ENCODE measurements at regions of chrX and their contacts with region 1.

Region 1: GRCh38 chrX:64975989-64976672 is at the start of gene ZC4H2:
- DNase-seq: peak; percentile 82
- H3K4me3 ChIP-seq: peak within 1 kb of the TSS; percentile 91
- H3K27ac ChIP-seq: peak within 1 kb of the TSS; percentile 43
- H3K4me1 ChIP-seq: peaks cover 15% of the 10 kb centered on the region
- CTCF ChIP-seq: no peak
- total RNA-seq, gene ZC4H2: 20.1 and 21.0 TPM in 2 replicates

Region 2: GRCh38 chrX:64850371-64851082 is 125.6 kb before region 1 on chrX:
- CTCF ChIA-PET with region 1: no interaction called
- POLR2A ChIA-PET with region 1: no interaction called
- intact Hi-C with region 1: loop called (anchors 5 kb)
- DNase-seq: peak; percentile 89
- H3K4me3 ChIP-seq: peak overlapping the region; percentile 47
- H3K27ac ChIP-seq: peak overlapping the region; percentile 99
- H3K4me1 ChIP-seq: peaks cover 48% of the 10 kb centered on the region
- CTCF ChIP-seq: no peak

Region 3: DNA sequence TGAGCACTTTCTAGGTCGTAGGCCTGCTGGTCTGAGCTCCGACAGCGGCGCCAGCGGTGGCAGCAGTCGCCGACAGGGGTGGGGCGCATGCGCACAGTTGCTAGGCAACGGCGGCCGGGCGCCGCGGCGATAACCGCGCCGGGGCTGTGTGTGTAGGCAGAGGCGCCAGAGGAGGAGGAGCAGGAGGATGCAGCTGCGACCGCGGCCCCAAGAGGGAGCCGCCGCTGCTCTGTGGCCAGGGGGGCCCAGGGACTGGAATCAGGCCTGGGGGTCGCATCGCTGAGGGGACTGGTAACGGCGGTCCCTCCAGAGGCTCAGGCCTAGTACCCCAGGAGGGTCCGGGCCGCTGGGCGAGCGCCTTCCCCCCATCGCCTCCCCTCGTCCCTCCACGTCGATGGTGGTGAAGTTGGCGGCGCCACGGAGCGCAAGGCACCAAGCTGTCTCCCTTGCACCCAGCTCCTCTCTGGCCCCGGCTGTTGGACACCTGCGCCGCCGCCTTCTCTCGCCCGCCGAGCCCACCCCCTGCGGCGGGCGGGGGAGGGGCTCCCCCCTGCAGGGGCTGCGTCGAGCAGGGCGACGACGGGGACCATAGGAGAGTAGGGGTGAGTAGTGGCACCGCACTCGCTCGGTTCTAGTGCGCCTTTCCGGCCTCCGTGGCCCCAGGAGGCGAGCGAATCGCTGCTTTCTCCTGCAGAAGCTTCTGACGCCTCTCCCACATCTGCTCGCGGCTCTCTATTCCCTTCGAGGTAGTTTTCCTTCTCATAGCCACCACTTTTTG is 58.7 kb after region 1 on chrX:
- CTCF ChIA-PET with region 1: no interaction called
- POLR2A ChIA-PET with region 1: interaction called, 5 read pairs
- intact Hi-C with region 1: loop called (anchors 2 kb)
- DNase-seq: peak; percentile 87
- H3K4me3 ChIP-seq: peak within 1 kb of the TSS; percentile 80
- H3K27ac ChIP-seq: peak within 1 kb of the TSS; percentile 71
- H3K4me1 ChIP-seq: peaks cover 15% of the 10 kb centered on the region
- CTCF ChIP-seq: peak; percentile 62

Region 4: DNA sequence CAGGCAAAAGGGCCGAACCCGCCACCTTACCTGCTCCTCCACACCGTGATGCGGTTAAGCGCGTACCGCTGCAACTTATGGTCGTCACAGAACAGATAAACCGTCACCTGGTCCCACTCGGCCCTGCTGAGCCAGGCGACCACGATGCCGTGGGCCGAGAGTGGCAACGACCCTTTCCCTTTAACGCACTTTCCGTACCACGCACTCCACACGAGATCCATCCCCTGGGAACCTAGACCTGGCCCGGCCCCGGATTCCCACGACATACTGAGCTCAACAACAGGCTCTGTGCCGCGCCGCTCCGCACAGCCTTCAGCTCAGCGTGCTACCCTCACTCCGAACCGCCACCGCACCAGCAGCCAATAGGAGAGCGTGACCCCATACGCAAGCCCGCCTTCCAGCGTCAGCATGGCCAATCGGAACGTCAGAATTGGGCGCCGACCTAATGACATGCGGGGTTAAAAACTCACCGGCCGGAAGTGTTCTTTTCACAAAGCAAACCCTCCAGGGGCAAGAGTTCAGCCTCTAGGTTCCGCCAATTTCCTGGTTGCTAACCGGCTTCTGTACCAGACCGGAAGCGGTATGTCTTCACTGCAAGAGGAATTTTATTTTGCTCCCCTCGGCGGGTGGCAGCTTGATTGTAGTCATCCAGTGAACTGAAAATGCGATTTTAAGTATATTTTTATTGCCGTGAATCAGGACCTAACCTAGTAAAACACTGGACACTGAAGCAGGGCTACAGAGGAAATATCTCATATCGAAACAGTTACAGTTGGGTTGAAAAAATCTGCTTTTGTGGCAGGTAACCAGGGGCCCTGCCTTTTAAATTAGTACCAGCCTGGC is 558.5 kb after region 1 on chrX and contains the start of gene LAS1L:
- CTCF ChIA-PET with region 1: no interaction called
- POLR2A ChIA-PET with region 1: no interaction called
- intact Hi-C with region 1: loop called (anchors 10 kb)
- DNase-seq: peak; percentile 94
- H3K4me3 ChIP-seq: peak within 1 kb of the TSS; percentile 99
- H3K27ac ChIP-seq: peak within 1 kb of the TSS; percentile 48
- H3K4me1 ChIP-seq: peaks cover 12% of the 10 kb centered on the region
- CTCF ChIP-seq: no peak
- total RNA-seq, gene LAS1L: 41.0 and 45.4 TPM in 2 replicates

Measured in OCI-LY7 (cell line).